ENCODE measurements at regions of chr20 and their contacts with region 1.

Region 1: GRCh38 chr20:16806886-16807285 is 58.7 kb downstream of the OTOR start:
- DNase-seq: no peak
- H3K4me3 ChIP-seq: no peak overlapping the region
- CTCF ChIP-seq: no peak

Region 2: DNA sequence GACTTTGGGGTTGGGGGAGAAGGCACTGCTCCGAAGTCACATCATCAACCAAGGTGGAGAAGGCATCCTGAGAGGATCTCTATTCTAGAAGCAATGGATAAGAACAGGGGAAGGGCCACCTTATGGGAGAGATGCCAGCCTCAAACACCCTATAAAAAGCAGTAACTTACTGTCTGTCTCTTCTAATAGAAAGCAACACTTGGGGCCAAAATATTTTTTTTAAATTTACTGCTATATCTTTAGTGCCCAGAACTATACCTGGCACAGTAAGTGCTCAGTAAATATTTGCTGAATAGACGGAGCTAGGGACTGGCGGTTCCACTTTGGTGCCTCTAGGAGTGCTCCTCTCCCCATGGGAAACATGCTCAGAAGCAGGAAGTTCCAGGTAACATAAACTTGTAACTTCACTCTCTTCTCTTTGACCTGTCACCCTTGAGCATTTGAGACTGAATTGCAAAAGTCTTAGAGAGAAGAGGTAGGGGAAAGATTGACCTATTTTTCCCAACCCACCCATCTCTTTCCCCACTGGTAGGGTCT is 59.5 kb before region 1 on chr20:
- in situ Hi-C with region 1: no loop called
- DNase-seq: no peak
- H3K4me3 ChIP-seq: no peak overlapping the region
- CTCF ChIP-seq: peak; percentile 15

Region 3: DNA sequence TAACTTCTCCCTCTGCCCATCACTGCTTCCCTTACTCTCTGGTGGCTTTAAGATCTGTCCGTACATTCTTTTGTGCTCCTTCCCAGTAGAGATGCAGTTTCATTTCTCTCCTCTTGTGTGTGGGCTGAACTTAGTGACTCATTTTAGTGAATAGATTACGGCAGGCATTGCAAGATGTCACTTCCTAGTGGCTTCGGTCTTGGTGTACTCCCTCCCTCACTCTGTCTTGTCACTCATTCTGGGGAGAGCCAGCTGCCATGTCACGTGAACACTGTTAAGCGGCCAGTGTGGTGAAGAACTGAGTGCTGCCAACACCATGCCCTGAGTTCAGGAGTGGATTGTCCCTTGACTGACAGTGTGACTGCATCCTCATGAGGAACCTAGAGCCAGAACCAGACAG is 57.2 kb after region 1 on chr20:
- in situ Hi-C with region 1: no loop called
- DNase-seq: no peak
- H3K4me3 ChIP-seq: no peak overlapping the region
- CTCF ChIP-seq: no peak

Region 4: DNA sequence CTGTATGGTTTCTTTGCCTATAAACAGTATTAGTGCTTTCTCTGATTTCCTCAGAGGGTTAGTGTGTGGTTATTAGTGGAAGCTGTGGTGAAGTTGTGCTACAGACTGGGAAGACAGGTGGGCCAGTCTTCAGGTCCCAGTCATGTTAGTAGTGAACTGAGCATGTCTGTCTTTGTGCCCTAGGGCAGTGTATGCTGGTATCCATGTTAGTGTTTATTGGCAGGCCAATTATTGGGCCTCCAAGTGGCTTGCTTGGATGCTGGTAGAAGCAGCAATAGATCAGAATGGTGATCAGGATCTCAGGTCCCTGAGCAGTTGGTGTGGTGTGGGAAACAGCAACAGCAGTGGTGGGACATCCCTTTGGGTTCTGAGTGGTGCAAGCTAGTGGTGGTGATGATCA is 78.9 kb after region 1 on chr20:
- in situ Hi-C with region 1: no loop called
- DNase-seq: no peak
- H3K4me3 ChIP-seq: no peak overlapping the region
- CTCF ChIP-seq: no peak

Region 5: GRCh38 chr20:17431621-17432364 is 624.9 kb after region 1 on chr20:
- in situ Hi-C with region 1: loop called (anchors 5 kb)
- DNase-seq: peak; percentile 20
- H3K4me3 ChIP-seq: no peak overlapping the region
- CTCF ChIP-seq: peak; percentile 82

Measured in astrocyte of the cerebellum (primary cell).